ENCODE measurements at regions of chr9 and their contacts with region 1.

Region 1: DNA sequence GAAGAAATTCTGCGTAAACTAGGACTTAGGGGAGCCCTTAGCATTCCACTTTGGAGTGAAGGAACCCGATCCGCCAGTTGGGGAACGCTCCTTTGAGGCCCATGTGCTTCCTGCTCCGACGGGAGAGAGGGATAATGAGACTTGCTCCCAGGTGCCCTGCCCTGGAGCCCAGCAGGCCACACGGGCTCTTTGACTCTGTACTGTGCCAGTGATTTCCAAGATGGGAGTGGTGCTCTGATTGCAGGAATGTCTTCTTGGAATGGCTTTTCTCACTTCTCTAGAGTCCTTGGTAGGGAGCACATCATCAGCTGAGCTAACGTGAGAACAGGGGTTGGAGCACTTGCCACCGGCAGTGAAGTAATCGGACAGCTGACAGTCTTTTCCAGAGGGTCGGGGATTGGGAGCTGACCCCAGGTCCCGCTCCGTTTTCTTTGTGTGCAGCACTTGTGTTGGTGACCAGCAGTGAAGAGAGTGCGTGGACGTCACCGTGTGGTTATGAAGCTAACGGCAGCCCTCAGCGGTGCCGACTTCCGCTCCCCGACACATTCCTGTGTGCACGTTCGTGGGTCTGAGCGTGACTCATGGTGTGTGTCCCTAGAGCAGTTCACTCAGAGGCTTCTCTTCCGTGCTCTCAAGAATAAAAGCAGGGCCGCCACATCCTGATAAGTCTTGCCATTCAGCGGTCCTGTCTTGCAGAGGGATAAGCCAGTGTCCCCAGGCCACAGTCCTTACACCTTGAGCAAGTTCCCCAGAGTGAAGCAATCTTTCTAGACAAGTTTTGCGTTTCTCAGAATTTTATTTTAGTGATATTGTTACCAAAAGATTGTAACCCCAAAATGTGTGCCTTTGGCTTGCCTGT is 25.6 kb downstream of the ABL1 start:
- DNase-seq: peak; percentile 99
- ATAC-seq: peak; percentile 87
- H3K4me3 ChIP-seq: no peak overlapping the region
- H3K27ac ChIP-seq: peak overlapping the region; percentile 53
- H3K4me1 ChIP-seq: peaks cover 35% of the 10 kb centered on the region
- H3K27me3 ChIP-seq: no peaks in the 10 kb centered on the region
- CTCF ChIP-seq: peak; percentile 55
- POLR2A ChIP-seq: peak; percentile 88
- RAD21 ChIP-seq: peak; percentile 73

Region 2: GRCh38 chr9:130712564-130713285 is 148.0 kb before region 1 on chr9:
- CTCF ChIA-PET with region 1: interaction called, 9 read pairs
- POLR2A ChIA-PET with region 1: no interaction called
- dilution Hi-C with region 1: no loop called
- in situ Hi-C with region 1: loop called (anchors 5 kb)
- intact Hi-C with region 1: loop called (anchors 1 kb)
- DNase-seq: peak; percentile 98
- ATAC-seq: peak; percentile 97
- H3K4me3 ChIP-seq: peak overlapping the region; percentile 60
- H3K27ac ChIP-seq: peak overlapping the region; percentile 88
- H3K4me1 ChIP-seq: peaks cover 2% of the 10 kb centered on the region; the same call in 1 of the 2 replicates
- H3K27me3 ChIP-seq: no peaks in the 10 kb centered on the region
- CTCF ChIP-seq: no peak
- POLR2A ChIP-seq: peak; percentile 98
- RAD21 ChIP-seq: peak; percentile 3; the same call in 1 of the 2 replicates

Region 3: DNA sequence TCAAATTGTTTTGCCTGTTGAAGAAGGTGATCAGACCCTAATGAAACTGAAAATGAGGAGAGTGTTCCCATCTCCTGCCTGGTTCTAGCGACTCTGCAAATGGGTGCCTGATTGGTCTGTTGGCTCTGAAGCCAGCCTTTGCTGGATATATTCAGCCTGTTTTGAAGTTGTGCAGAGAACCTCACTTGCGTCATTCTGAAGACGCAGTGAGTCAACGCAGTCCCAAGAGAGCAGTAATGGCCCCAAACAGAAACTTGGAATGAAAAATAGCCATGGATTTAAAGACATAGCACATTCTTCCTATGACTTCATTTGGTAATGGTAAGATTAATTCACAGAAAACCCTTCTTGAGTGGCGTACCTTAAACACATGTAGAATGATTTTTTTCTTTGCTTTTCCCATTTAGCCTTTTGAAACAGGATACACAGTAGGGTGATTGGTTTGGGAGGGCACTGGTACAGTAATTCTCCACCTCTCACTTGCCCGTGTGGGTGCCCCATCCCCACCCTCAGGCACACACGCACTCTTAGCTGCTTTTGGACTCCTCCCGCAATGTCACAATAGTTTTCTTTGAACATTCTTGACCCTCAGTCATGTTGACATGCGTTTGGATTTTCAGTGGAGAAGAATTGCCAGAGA is 79.7 kb before region 1 on chr9:
- CTCF ChIA-PET with region 1: no interaction called
- POLR2A ChIA-PET with region 1: interaction called, 4 read pairs
- dilution Hi-C with region 1: no loop called
- in situ Hi-C with region 1: loop called (anchors 5 kb)
- intact Hi-C with region 1: no loop called
- DNase-seq: peak; percentile 98
- ATAC-seq: peak; percentile 87
- H3K4me3 ChIP-seq: peak overlapping the region; percentile 39; the same call in 1 of the 2 replicates
- H3K27ac ChIP-seq: peak overlapping the region; percentile 97
- H3K4me1 ChIP-seq: peaks cover 22% of the 10 kb centered on the region
- H3K27me3 ChIP-seq: no peaks in the 10 kb centered on the region
- CTCF ChIP-seq: no peak
- POLR2A ChIP-seq: peak; percentile 89
- RAD21 ChIP-seq: 0 out of 2 replicates have a peak, but pooled peaks have one; percentile 18

Region 4: GRCh38 chr9:130834371-130835311 is 26.0 kb before region 1 on chr9 and contains the start of gene ABL1:
- CTCF ChIA-PET with region 1: interaction called, 4 read pairs
- POLR2A ChIA-PET with region 1: no interaction called
- dilution Hi-C with region 1: no loop called
- in situ Hi-C with region 1: no loop called
- intact Hi-C with region 1: loop called (anchors 1 kb)
- DNase-seq: peak; percentile 85
- ATAC-seq: peak; percentile 76
- H3K4me3 ChIP-seq: peak within 1 kb of the TSS; percentile 75
- H3K27ac ChIP-seq: peak within 1 kb of the TSS; percentile 98
- H3K4me1 ChIP-seq: peaks cover 19% of the 10 kb centered on the region
- H3K27me3 ChIP-seq: no peaks in the 10 kb centered on the region
- CTCF ChIP-seq: no peak
- POLR2A ChIP-seq: peak; percentile 80
- RAD21 ChIP-seq: 0 out of 2 replicates have a peak, but pooled peaks have one; percentile 6
- total RNA-seq, gene ABL1: 31.9 and 33.7 TPM in 2 replicates

Measured in IMR-90 (cell line).